ENCODE measurements at regions of chr14 and their contacts with region 1.

Region 1: DNA sequence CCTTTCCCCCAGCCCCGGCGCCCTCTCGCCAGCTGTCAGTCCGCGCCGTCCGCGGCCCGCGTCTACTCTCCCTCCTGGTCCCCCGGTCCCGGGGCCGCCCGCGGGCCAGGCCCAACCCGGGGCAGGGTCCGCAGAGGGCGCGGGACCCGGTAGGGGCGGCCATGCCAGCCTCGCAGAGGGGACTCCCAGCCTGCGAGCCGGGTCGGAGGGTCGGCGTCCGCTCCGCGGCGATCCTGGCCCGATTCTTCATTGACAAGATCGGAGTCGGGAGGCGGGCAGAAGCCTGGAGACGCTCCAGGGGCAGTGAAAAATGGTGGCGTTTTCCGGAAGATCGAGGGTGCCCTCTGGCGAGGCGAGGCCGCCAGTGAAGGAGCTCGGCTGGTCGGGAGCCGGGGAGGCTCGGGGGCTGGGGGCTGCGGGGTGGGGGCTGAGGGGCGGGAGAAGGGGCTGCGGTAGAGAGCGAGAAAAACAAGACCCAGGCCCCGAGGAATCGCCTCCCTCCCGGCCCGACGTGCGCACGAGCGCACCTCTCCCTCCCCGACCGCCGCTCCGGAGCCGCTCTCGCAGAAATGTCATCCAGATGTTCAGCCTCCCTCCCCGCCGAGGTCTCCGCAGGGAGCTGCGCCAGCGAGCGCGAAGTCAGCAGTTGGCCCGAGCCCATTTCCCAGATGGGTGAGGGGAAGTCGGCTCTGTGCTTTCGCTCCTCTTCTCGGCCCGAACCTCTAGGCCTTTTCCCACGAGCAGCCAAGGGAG is 647 bp upstream of the TGFB3 start:
- DNase-seq: peak; percentile 84
- H3K4me3 ChIP-seq: peak overlapping the region; percentile 66 to 74
- H3K27ac ChIP-seq: peak overlapping the region; percentile 93 to 98
- H3K4me1 ChIP-seq: peaks cover 13% of the 10 kb centered on the region
- H3K27me3 ChIP-seq: no peaks in the 10 kb centered on the region
- CTCF ChIP-seq: peak; percentile 56 to 67 (median 62)
- POLR2A ChIP-seq: no peak

Region 2: GRCh38 chr14:75709207-75709812 is 273.1 kb before region 1 on chr14:
- intact Hi-C with region 1: loop called (anchors 1 kb)
- DNase-seq: peak; percentile 83
- H3K4me3 ChIP-seq: no peak overlapping the region
- H3K27ac ChIP-seq: no peak overlapping the region
- H3K4me1 ChIP-seq: peaks cover 3% of the 10 kb centered on the region
- H3K27me3 ChIP-seq: no peaks in the 10 kb centered on the region
- CTCF ChIP-seq: peak; percentile 45 to 84 (median 80)
- POLR2A ChIP-seq: no peak

Region 3: DNA sequence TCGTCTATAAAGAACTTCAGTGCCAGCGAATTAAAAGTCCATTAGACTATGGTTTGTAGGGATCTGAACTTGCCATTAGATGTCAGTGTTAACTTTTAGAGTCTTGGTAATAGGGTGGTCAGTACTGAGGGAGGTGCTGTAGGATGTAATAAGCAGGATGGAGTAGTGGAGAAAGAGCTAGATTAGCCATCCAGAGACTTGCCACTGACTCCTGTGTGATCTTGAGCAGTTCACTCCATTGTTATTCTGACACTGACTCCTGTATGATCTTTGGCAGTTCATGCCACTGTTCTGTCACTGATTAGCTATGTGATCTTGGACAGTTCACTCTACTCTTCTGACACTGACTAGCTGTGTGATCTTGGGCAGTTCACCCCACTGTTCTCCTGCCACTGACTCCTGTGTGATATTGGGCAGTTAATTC is 187.8 kb before region 1 on chr14:
- intact Hi-C with region 1: loop called (anchors 1 kb)
- DNase-seq: no peak
- H3K4me3 ChIP-seq: no peak overlapping the region
- H3K27ac ChIP-seq: no peak overlapping the region
- H3K4me1 ChIP-seq: no peaks in the 10 kb centered on the region
- H3K27me3 ChIP-seq: no peaks in the 10 kb centered on the region
- CTCF ChIP-seq: peak in 3 of 4 experiments; percentile 50 to 61 (median 55)
- POLR2A ChIP-seq: no peak

Region 4: GRCh38 chr14:75822522-75823141 is 159.8 kb before region 1 on chr14:
- intact Hi-C with region 1: loop called (anchors 10 kb)
- DNase-seq: no peak
- H3K4me3 ChIP-seq: no peak overlapping the region
- H3K27ac ChIP-seq: peak overlapping the region; percentile 32 to 51
- H3K4me1 ChIP-seq: peaks cover 7% of the 10 kb centered on the region
- H3K27me3 ChIP-seq: no peaks in the 10 kb centered on the region
- CTCF ChIP-seq: no peak
- POLR2A ChIP-seq: no peak

Region 5: GRCh38 chr14:75906676-75907280 is 75.7 kb before region 1 on chr14:
- intact Hi-C with region 1: loop called (anchors 2 kb)
- DNase-seq: peak; percentile 53
- H3K4me3 ChIP-seq: no peak overlapping the region
- H3K27ac ChIP-seq: no peak overlapping the region
- H3K4me1 ChIP-seq: no peaks in the 10 kb centered on the region
- H3K27me3 ChIP-seq: no peaks in the 10 kb centered on the region
- CTCF ChIP-seq: peak; percentile 78 to 94 (median 82)
- POLR2A ChIP-seq: no peak

Region 6: GRCh38 chr14:76090616-76091391 is 108.4 kb after region 1 on chr14:
- intact Hi-C with region 1: loop called (anchors 10 kb)
- DNase-seq: peak; percentile 8
- H3K4me3 ChIP-seq: no peak overlapping the region
- H3K27ac ChIP-seq: peak overlapping the region; percentile 44 to 49
- H3K4me1 ChIP-seq: no peaks in the 10 kb centered on the region
- H3K27me3 ChIP-seq: no peaks in the 10 kb centered on the region
- CTCF ChIP-seq: peak in 1 of 4 experiments; percentile 25
- POLR2A ChIP-seq: no peak

Region 7: GRCh38 chr14:76352639-76353281 is 370.3 kb after region 1 on chr14:
- intact Hi-C with region 1: no loop called
- DNase-seq: peak; percentile 20
- H3K4me3 ChIP-seq: peak overlapping the region in 1 of 2 donors; percentile 16
- H3K27ac ChIP-seq: no peak overlapping the region
- H3K4me1 ChIP-seq: no peaks in the 10 kb centered on the region
- H3K27me3 ChIP-seq: no peaks in the 10 kb centered on the region
- CTCF ChIP-seq: peak; percentile 54 to 79 (median 73)
- POLR2A ChIP-seq: no peak